ENCODE measurements at regions of chr1 and their contacts with region 1.

Region 1: DNA sequence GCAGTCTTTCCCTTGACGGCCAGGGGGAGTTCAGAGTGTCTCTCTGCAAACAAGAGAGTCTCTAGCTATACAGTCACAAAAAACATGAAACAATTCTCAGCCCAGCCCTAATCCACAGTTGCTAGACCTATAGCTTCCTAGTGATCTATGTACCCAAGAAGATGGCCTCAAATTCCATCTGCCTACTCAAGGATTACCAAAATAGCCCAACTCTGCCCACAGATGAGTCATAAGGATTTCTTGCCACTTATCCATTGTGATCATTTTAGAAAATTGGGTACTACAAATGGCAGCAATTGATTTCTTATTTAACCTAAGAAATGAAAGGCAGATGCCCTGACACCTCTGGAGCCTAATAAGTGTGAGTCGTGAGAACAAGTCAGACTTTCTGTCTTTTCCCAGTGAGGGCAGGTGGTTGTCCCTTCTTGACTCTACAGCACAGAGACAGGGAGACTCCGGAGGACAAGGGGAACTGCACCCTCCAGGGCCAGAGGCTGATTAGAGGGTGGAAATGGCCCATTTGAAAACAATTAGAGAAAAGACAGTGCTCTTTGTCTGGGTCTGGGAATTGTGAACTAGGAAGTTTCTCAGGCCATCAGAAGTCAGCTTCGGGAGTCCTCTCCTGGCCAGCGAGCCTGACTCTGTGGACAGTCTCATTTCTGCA is 65.4 kb downstream of the ABCA4 start:
- DNase-seq: no peak
- ATAC-seq: no peak
- H3K4me3 ChIP-seq: no peak overlapping the region
- H3K27ac ChIP-seq: no peak overlapping the region
- H3K4me1 ChIP-seq: no peaks in the 10 kb centered on the region
- H3K27me3 ChIP-seq: no peaks in the 10 kb centered on the region
- CTCF ChIP-seq: no peak
- POLR2A ChIP-seq: no peak

Region 2: DNA sequence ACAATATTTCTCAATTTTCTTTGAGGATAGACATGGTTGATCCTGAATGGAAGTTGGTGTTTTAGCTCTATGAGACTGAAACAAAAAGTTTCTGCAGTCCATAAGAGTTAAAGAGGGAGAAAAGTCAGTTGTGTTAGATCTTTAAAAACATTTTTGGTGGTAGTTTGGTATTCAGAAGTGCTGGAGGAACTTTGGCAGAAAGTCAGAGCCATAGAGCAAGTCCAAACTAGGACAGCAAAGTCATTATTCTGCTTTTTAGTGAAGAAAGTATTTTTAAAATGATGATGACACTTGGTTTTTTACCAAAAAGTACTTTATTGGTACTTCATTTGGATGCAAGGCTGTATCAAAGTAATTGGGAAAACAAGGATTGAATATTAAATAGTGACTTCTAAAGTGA is 565.8 kb before region 1 on chr1:
- intact Hi-C with region 1: no loop called
- DNase-seq: no peak
- ATAC-seq: no peak
- H3K4me3 ChIP-seq: no peak overlapping the region
- H3K27ac ChIP-seq: no peak overlapping the region
- H3K4me1 ChIP-seq: peaks cover 15% of the 10 kb centered on the region
- H3K27me3 ChIP-seq: no peaks in the 10 kb centered on the region
- CTCF ChIP-seq: no peak
- POLR2A ChIP-seq: no peak

Region 3: GRCh38 chr1:94160811-94161210 is 105.2 kb after region 1 on chr1:
- intact Hi-C with region 1: no loop called
- DNase-seq: no peak
- ATAC-seq: no peak
- H3K4me3 ChIP-seq: no peak overlapping the region
- H3K27ac ChIP-seq: no peak overlapping the region
- H3K4me1 ChIP-seq: no peaks in the 10 kb centered on the region
- H3K27me3 ChIP-seq: no peaks in the 10 kb centered on the region
- CTCF ChIP-seq: no peak
- POLR2A ChIP-seq: no peak

Region 4: DNA sequence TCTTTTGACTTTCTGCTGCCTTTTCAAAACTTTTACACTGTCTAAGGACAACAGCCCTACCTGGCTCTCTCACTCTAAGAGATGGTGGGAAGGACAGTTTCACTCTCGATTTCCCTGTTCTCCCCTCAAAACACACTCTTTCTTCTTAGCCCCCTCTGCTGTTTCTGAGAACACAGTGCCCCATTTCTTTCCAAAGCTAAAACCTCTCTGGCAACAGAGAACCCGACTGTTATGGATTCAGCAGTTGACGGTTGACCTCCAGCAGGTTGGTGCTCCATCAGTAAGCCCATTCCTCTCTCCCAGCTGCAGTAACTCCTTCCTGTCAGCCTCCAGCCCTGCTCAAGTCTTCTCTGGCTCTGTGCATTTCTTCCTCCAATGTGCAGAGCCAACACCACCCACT is 274.4 kb after region 1 on chr1:
- intact Hi-C with region 1: loop called (anchors 5 kb)
- DNase-seq: no peak
- ATAC-seq: peak; percentile 22
- H3K4me3 ChIP-seq: no peak overlapping the region
- H3K27ac ChIP-seq: no peak overlapping the region
- H3K4me1 ChIP-seq: peaks cover 27% of the 10 kb centered on the region
- H3K27me3 ChIP-seq: no peaks in the 10 kb centered on the region
- CTCF ChIP-seq: peak in 5 of 7 experiments; percentile 8 to 50 (median 35)
- POLR2A ChIP-seq: no peak

Measured in body of pancreas (tissue), 4 donors.